Activated CD4-positive, alpha-beta T cell treated with anti-CD3 and anti-CD28 coated beads, Interleukin-2, amount 10 ng/mL, durations not matched to agents 7 days and 5 days (primary cell): ENCODE measurements at regions of chr19 and their contacts with region 1.

Region 1: GRCh38 chr19:15418588-15419412 is at the start of gene AKAP8L:
- DNase-seq: peak; percentile 100
- H3K4me3 Mint-ChIP-seq: peak within 1 kb of the TSS; percentile 98
- H3K27ac Mint-ChIP-seq: peak within 1 kb of the TSS; percentile 99
- H3K4me1 Mint-ChIP-seq: peaks cover 38% of the 10 kb centered on the region
- H3K27me3 Mint-ChIP-seq: no peaks in the 10 kb centered on the region
- total RNA-seq, gene AKAP8L: 84.3 to 96.7 TPM

Region 2: GRCh38 chr19:15318241-15318691 is 100.5 kb before region 1 on chr19:
- CTCF ChIA-PET with region 1: no interaction called
- POLR2A ChIA-PET with region 1: no interaction called
- DNase-seq: no peak
- H3K4me3 Mint-ChIP-seq: no peak overlapping the region
- H3K27ac Mint-ChIP-seq: peak overlapping the region; percentile 13
- H3K4me1 Mint-ChIP-seq: peaks cover 80% of the 10 kb centered on the region
- H3K27me3 Mint-ChIP-seq: no peaks in the 10 kb centered on the region

Region 3: DNA sequence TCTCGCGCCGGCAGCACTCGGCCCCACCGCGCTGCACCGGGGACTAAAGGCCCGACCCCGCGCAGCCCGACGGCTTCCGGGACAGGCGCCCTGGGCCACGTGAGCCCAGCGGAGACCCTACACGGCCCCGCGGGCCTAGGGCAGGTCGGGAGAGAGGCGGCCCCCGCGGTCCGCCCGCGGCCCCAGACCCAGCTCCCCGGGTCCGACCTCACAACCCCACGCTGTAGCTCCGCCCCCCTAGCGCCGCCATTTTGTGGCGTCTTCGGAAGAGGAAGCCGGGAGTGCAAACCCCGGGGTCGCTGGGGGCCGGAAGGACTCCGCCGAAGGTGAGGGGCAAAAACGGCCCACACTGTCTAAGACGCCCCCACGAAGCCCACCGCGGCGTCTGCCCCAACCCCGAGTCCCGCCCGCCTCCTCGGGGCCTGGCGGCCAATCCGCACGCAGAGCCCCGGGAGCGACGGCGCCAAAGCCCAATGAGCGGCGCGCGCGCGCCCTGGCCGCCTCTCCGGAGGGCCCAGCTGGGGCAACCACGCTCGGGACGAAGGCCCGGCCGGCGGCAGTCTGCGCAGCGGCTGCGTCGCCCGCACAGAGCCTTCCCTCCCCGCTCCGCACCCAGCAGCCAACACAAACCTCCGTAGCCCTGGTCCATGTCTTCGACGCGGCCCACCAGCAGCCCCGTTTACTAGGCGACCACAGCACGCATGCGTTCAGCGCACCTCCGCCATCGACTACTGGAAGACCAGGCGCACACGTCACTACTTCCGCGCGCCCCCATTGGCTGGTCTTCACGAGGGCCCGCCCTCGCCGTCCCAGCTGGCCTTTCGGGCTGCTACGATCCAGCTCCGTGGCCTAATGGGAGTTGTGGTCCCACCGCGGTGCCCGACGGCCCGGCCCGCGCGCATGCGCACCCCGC is 39.5 kb before region 1 on chr19 and contains the start of gene AKAP8:
- CTCF ChIA-PET with region 1: interaction called, 16 read pairs
- POLR2A ChIA-PET with region 1: interaction called, 11 read pairs
- DNase-seq: peak; percentile 97
- H3K4me3 Mint-ChIP-seq: peak within 1 kb of the TSS; percentile 87
- H3K27ac Mint-ChIP-seq: peak within 1 kb of the TSS; percentile 99
- H3K4me1 Mint-ChIP-seq: peaks cover 32% of the 10 kb centered on the region
- H3K27me3 Mint-ChIP-seq: no peaks in the 10 kb centered on the region
- total RNA-seq, gene AKAP8: 54.5 to 57.1 TPM

Region 4: GRCh38 chr19:15404097-15404779 is 14.6 kb before region 1 on chr19:
- CTCF ChIA-PET with region 1: interaction called, 12 read pairs
- POLR2A ChIA-PET with region 1: interaction called, 4 read pairs
- DNase-seq: no peak
- H3K4me3 Mint-ChIP-seq: no peak overlapping the region
- H3K27ac Mint-ChIP-seq: peak overlapping the region; percentile 27
- H3K4me1 Mint-ChIP-seq: peaks cover 12% of the 10 kb centered on the region
- H3K27me3 Mint-ChIP-seq: no peaks in the 10 kb centered on the region

Region 5: GRCh38 chr19:15432629-15433518 is 14.1 kb after region 1 on chr19:
- CTCF ChIA-PET with region 1: interaction called, 31 read pairs
- POLR2A ChIA-PET with region 1: no interaction called
- DNase-seq: peak; percentile 93
- H3K4me3 Mint-ChIP-seq: peak overlapping the region; percentile 91
- H3K27ac Mint-ChIP-seq: peak overlapping the region; percentile 97
- H3K4me1 Mint-ChIP-seq: peaks cover 28% of the 10 kb centered on the region
- H3K27me3 Mint-ChIP-seq: no peaks in the 10 kb centered on the region

Region 6: DNA sequence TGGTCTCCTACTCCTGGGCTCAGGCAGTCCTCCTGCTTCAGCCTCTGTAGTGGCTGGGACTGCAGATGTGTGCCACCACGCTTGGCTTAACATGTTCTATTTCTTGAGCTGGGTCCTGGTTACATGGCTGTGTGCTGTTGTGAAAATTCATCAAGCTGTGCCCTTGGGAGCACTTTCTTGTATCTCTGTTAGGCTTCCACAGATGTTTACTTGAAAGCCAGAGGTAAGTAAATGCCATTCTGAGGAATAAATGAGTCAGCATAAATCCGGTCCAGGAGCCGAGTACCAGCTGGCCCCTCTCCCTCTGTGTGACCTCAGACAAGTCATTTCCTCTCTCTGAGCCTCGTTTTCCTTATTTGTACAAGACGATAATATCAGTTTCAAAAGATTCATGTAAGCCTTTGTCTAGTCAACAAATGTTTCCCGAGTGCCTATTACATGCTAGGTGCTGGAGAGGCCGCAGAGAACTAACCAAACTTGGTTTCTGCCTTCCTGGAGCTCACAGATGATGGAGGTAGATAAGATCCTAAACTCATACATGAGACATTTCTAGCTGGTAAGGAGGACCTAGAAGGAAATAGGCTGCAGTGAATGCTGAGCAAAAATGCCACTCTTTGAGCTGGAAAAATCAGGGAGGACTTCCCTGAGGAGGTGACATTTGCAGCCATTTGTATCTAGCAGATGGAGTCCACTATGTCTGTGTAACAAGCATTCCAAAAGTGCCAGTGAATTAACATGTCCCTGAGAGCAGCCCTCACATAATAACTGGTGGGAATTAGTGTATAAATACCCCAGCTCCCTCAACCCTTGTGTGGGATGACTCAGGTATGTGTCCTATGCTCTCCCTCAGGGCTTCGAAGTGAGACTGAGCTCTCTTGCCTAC is 48.3 kb after region 1 on chr19:
- CTCF ChIA-PET with region 1: interaction called, 19 read pairs
- POLR2A ChIA-PET with region 1: interaction called, 5 read pairs
- DNase-seq: peak; percentile 76
- H3K4me3 Mint-ChIP-seq: peak overlapping the region; percentile 49
- H3K27ac Mint-ChIP-seq: peak overlapping the region; percentile 92
- H3K4me1 Mint-ChIP-seq: peaks cover 62% of the 10 kb centered on the region
- H3K27me3 Mint-ChIP-seq: peaks cover 14% of the 10 kb centered on the region

Region 7: GRCh38 chr19:15532779-15533521 is 114.2 kb after region 1 on chr19:
- CTCF ChIA-PET with region 1: no interaction called
- POLR2A ChIA-PET with region 1: no interaction called
- DNase-seq: peak; percentile 26
- H3K4me3 Mint-ChIP-seq: no peak overlapping the region
- H3K27ac Mint-ChIP-seq: peak overlapping the region; percentile 27
- H3K4me1 Mint-ChIP-seq: peaks cover 17% of the 10 kb centered on the region
- H3K27me3 Mint-ChIP-seq: peaks cover 6% of the 10 kb centered on the region

Region 8: DNA sequence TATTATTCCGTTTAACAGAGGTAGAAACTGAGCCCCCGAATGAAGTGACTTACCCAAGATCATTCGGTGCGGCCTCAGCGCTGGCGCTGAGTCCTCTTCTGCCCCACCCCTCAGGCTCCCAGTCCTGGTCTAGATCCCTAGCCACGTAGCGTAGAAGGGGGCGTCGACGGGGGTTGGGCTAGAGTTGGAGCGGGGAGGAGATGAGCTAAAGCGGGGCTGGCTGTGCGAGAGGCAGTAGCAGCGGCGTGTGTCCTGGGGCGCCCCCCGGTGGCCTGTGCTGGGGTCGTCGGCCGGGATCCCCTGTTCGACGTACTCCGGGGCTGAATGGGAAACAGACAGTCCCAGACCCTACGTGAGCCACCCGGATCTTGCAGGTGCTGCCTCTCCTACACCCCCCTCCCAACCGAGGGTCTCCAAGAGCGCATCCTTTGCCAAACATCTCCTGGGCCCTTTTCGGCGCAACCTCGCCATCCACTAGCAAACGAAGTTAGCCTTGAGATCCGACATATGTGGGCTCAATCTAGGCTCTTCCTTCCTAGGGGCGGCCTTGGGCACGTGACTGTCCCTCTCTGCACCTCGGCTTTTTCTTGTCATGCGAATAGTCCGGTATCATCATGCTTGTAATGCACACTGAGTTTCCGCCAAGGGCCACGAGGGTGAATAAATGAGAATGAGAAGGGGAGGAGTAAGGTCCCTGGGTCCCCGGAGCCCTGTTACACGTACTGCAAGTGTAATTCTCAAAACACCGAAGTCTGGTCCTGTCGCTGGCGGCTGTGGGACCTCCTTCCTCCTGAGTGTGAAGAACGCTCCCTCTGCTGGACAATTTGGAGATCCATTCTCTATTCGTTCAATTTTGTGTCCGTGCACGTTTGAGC is 137.2 kb after region 1 on chr19:
- CTCF ChIA-PET with region 1: interaction called, 108 read pairs
- POLR2A ChIA-PET with region 1: interaction called, 11 read pairs
- DNase-seq: peak; percentile 96
- H3K4me3 Mint-ChIP-seq: peak overlapping the region; percentile 71
- H3K27ac Mint-ChIP-seq: peak overlapping the region; percentile 87
- H3K4me1 Mint-ChIP-seq: peaks cover 31% of the 10 kb centered on the region
- H3K27me3 Mint-ChIP-seq: no peaks in the 10 kb centered on the region

Region 9: GRCh38 chr19:15656467-15656866 is 237.7 kb after region 1 on chr19:
- CTCF ChIA-PET with region 1: no interaction called
- POLR2A ChIA-PET with region 1: no interaction called
- DNase-seq: no peak
- H3K4me3 Mint-ChIP-seq: no peak overlapping the region
- H3K27ac Mint-ChIP-seq: no peak overlapping the region
- H3K4me1 Mint-ChIP-seq: no peaks in the 10 kb centered on the region
- H3K27me3 Mint-ChIP-seq: peaks cover 27% of the 10 kb centered on the region